Right cardiac atrium (tissue), 5 donors: ENCODE measurements at regions of chr11 and their contacts with region 1.

Region 1: DNA sequence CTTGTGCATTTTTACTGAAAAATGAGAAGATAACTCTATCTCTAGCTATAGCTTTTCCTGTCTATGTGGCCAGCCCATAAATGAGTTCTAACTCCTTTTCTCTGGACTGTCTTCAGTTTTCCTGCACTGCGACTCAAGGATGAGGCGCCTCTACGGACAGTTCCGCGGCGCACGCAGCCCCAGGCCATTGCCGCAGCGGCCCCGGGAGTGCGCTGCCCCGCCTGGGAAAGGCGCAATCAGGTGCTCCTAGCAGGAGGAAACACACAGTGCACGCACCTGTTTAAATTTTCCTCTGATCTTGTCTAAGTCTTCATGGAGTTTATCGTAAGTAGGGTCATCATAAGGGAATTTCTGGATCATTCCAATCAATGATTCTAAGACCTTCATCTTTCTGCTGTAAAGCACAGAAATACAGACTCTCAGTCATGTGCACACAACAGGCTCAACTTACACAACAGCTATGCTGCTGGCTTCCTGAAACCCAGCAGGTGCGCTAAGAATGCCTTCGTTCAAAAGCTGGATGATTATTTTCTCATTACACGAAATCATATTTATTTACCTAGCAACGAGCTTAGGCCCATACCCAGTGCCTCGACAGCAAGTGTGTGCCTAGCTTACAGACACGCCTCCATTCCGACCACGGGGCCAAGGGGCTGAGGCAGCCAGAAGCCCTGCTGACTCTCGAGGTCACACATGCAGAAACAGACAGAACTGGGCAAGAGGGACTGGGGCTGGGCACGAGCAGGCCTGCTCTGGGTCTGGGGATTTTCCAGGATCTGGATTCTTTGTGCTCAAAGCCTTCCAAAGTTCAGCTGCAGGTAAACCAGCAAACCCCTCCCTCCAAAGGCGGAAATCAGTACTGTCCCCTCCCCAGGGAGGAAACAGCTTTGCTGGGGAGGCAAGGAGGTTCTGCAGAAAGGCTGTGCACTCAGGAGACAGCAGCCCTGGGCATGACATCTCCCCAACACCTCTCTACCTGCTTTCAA is 7.2 kb downstream of the LTO1 start:
- DNase-seq: no peak
- ATAC-seq: no peak
- H3K4me3 ChIP-seq: no peak overlapping the region
- H3K27ac ChIP-seq: no peak overlapping the region
- H3K4me1 ChIP-seq: no peaks in the 10 kb centered on the region
- H3K27me3 ChIP-seq: no peaks in the 10 kb centered on the region

Region 2: DNA sequence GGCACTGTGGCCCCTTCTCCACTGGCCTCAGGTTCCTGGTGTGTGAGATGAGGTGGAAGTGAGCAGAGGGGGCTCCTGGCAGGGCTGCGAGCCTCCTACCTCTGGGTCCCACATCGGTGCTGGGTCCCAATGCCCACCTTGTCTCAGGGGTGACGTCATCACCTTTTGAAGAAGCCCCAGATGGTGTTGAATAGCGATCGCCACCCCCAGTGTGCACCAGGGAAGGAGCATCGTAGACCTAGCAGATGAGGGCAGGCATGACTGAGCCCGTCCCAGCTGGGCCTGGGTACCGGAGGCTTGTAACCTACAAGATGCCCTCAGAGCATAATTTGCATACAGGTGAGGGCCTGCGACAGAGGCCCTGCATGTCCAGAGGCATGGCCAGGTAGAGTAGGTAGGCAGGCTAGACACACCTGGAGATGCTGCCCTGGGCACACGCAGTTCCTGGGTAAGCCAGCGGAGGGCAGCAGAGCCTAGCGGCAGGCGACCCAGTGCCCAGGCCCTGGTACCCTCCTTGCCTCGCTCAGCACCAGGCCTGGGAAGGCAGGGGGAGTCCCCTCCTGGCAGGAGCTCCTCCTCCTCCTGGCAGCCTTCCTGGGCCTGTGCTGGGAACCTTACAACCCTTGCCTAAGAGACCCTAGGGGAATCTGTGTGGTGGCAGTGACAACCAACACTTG is 566.7 kb before region 1 on chr11:
- intact Hi-C with region 1: loop called in 2 of 4 experiments (anchors 5 kb)
- DNase-seq: peak; percentile 83 to 89 (median 88)
- ATAC-seq: peak; percentile 83 to 85
- H3K4me3 ChIP-seq: no peak overlapping the region
- H3K27ac ChIP-seq: no peak overlapping the region
- H3K4me1 ChIP-seq: no peaks in the 10 kb centered on the region
- H3K27me3 ChIP-seq: no peaks in the 10 kb centered on the region

Region 3: GRCh38 chr11:69588270-69588669 is 79.6 kb before region 1 on chr11:
- intact Hi-C with region 1: no loop called
- DNase-seq: no peak
- ATAC-seq: no peak
- H3K4me3 ChIP-seq: no peak overlapping the region
- H3K27ac ChIP-seq: no peak overlapping the region
- H3K4me1 ChIP-seq: no peaks in the 10 kb centered on the region
- H3K27me3 ChIP-seq: no peaks in the 10 kb centered on the region

Region 4: DNA sequence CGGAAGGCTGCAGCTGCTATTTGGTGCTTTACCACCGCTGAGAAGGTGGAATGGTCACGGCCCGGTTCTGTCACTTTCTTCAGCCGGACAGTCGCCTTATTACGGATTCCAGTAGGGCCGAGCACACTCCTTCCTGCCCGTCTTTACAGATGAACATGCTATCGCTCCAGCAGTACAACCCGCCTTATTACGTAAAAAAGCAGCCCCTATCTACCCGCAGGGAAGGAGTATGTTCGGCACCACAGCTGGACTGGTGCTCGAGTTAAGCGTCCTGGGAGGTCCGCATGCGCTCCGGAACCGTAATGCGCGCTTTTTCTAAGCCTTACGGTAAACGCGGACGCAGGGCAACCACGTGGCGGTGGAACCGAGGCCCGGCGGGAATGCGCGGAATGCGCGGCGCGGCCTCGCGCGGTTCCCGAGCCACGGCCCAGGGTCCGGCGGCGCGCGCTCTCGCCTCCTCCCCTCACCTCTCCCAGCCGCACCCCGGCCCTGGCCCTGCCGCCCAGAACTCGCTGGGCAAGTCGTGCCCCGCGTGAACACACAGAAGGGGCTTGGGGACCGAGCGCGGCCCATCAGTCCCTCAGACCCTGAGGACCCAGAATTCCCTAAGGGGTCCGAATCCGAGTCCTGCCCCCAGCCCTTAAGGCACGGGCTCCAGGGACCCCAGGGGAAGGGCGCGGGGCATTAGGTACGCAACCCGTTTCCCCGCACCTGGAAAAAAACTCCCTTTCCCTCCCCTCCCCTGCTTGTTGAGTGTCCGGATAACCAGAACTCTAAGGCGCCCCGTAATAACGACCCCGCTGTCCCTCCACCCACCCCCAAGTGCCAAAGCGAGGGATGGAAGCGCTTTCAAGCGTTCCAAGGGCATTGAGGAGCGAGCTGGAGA is 31.4 kb before region 1 on chr11:
- intact Hi-C with region 1: no loop called
- DNase-seq: peak; percentile 80 to 90 (median 89)
- ATAC-seq: peak; percentile 55 to 64
- H3K4me3 ChIP-seq: peak overlapping the region; percentile 13
- H3K27ac ChIP-seq: no peak overlapping the region
- H3K4me1 ChIP-seq: no peaks in the 10 kb centered on the region
- H3K27me3 ChIP-seq: no peaks in the 10 kb centered on the region